ENCODE measurements at regions of chr1 and their contacts with region 1.

Region 1: DNA sequence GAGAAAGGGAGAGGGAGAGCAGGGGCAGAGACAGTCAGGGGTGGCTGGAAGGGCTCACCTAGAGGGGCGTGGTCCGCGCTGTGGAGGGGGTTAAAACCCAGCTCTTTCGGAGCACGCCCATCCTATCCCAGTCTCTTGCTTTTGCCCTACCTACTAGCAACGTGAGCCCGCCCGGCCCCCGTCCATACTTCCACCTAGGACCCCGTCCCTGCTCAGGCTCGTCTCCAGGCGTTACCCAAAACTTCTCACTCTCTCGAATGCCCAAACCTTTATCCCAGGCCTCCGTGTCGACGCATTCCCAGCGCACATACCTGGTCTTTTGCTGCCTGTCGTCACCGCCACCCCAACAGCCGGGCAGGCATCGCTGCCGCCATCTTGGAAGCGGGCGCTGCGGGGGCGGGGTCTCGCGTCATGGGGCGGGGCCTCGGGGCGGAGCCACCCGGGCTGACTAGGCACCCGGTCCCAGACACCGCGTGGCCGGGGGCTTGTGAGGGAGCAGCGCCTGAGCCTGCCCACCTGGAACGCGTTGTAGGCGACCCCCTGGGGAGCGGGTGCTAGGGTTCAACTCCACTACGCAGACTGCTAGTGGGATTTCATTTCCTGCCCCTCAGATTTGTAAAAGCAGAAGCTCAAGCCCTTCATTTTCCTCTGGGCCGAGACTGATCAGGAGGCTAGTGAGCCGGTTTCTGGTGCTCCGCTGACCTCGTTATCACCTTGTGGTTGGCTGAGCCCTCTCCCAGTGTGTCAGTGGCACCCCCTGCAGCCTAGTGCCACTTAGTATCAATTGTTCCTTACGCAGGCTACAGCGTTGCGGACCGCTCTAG is at the start of gene B4GALT3:
- DNase-seq: no peak
- H3K4me3 ChIP-seq: peak within 1 kb of the TSS; percentile 99
- CTCF ChIP-seq: no peak

Region 2: GRCh38 chr1:161165742-161166668 is 11.3 kb before region 1 on chr1 and contains the start of gene PPOX:
- CTCF ChIA-PET with region 1: interaction called, 23 read pairs
- POLR2A ChIA-PET with region 1: interaction called, 10 read pairs
- DNase-seq: peak; percentile 91
- H3K4me3 ChIP-seq: peak within 1 kb of the TSS; percentile 93
- CTCF ChIP-seq: peak; percentile 52

Region 3: GRCh38 chr1:161201828-161202725 is 24.8 kb after region 1 on chr1 and contains the start of gene NDUFS2:
- CTCF ChIA-PET with region 1: interaction called, 16 read pairs
- POLR2A ChIA-PET with region 1: interaction called, 5 read pairs
- DNase-seq: peak; percentile 95
- H3K4me3 ChIP-seq: peak within 1 kb of the TSS; percentile 95
- CTCF ChIP-seq: peak; percentile 47